Caco-2 (cell line): ENCODE measurements at regions of chr19 and their contacts with region 1.

Region 1: DNA sequence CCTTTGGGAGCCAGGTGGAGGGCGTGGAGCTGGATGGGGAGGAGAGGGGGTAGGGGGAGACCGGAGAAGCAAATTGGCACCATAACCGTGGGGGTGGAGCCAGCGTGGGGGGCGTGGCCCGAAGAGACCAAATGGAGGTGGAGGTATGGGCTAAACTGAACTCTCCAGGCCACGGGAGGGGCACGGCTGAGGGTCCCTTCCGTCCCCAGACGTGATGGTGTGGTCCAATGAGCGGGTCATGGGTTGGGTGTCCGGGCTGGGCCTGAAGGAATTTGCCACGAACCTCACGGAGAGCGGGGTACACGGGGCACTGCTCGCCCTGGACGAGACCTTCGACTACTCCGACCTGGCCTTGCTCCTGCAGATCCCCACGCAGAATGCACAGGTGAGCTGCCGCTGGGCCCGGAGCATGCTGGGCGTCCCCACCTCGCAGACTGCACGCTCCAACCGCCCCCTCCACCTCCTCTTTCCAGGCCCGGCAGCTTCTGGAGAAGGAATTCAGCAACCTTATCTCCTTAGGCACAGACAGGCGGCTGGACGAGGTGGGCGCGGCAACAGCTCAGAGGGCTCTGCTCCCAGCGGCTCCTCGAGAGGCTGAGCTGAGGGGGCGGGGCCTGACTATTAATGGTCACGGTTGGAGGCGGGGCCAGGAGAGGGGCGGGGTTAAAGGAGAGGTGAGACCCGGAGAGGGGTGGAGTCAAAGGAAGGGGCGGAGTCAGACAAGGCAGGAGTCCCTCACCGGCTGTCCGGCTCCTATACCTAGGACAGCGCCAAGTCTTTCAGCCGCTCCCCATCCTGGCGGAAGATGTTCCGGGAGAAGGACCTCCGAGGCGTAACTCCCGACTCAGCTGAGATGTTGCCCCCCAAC is 6.2 kb downstream of the HRC start:
- DNase-seq: peak; percentile 100
- H3K4me3 ChIP-seq: peak overlapping the region; percentile 69
- H3K4me3 Mint-ChIP-seq: peak overlapping the region; percentile 91
- H3K27ac Mint-ChIP-seq: peak overlapping the region; percentile 61
- H3K4me1 ChIP-seq: peaks cover 13% of the 10 kb centered on the region
- H3K4me1 Mint-ChIP-seq: peaks cover 30% of the 10 kb centered on the region
- H3K27me3 ChIP-seq: no peaks in the 10 kb centered on the region
- H3K27me3 Mint-ChIP-seq: no peaks in the 10 kb centered on the region
- CTCF ChIP-seq: no peak

Region 2: DNA sequence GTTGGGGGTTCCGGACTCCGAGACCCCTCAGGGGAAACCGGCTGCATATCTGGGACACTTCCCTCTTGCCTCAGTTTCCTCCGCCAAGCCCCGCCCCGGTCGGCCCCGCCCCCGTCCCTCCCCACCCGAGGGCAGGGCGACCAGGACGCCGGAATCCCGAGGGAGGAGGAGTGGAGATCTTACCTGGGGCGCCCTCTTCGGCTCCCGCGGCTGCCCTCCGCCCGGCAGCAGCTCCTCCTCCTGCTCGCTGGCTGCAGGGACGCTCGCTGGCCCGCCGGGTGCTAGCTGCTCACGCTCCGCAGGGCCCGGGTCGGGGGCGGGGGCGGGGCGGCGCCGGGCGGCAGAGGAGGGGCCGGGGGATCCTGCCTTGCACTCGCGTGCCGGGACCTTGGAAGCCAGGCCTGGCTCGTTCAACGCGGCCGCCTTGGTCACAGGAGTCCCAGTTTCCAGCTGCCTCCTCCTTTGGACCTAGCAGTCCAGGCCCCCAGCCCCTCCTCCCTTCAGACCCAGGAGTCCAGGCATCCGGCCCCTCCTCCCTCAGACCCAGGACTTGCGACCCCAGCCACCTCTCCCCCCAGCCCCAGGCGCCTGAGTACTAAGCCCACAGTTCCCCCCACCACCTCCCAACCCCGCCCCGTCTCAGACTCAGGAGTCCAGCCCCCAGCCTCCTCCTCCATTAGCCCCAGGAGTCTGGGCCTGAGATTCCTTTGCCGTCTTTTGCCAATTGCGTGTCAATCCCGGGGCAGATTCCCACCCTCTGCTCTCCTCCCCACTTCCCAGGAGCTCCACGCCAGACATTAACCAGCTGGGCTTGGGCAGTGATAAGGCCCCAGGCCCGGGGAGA is 84.0 kb before region 1 on chr19 and contains the start of gene NTF4:
- CTCF ChIA-PET with region 1: interaction called, 13 read pairs
- POLR2A ChIA-PET with region 1: interaction called, 3 read pairs
- intact Hi-C with region 1: no loop called
- DNase-seq: peak; percentile 92
- H3K4me3 ChIP-seq: peak within 1 kb of the TSS; percentile 38
- H3K4me3 Mint-ChIP-seq: peak within 1 kb of the TSS; percentile 71
- H3K27ac Mint-ChIP-seq: peak within 1 kb of the TSS; percentile 73
- H3K4me1 ChIP-seq: peaks cover 34% of the 10 kb centered on the region
- H3K4me1 Mint-ChIP-seq: peaks cover 26% of the 10 kb centered on the region
- H3K27me3 ChIP-seq: no peaks in the 10 kb centered on the region
- H3K27me3 Mint-ChIP-seq: no peaks in the 10 kb centered on the region
- CTCF ChIP-seq: peak in 1 of 2 experiments; percentile 29
- total RNA-seq, gene NTF4: 9.1 and 10.2 TPM in 2 replicates

Region 3: DNA sequence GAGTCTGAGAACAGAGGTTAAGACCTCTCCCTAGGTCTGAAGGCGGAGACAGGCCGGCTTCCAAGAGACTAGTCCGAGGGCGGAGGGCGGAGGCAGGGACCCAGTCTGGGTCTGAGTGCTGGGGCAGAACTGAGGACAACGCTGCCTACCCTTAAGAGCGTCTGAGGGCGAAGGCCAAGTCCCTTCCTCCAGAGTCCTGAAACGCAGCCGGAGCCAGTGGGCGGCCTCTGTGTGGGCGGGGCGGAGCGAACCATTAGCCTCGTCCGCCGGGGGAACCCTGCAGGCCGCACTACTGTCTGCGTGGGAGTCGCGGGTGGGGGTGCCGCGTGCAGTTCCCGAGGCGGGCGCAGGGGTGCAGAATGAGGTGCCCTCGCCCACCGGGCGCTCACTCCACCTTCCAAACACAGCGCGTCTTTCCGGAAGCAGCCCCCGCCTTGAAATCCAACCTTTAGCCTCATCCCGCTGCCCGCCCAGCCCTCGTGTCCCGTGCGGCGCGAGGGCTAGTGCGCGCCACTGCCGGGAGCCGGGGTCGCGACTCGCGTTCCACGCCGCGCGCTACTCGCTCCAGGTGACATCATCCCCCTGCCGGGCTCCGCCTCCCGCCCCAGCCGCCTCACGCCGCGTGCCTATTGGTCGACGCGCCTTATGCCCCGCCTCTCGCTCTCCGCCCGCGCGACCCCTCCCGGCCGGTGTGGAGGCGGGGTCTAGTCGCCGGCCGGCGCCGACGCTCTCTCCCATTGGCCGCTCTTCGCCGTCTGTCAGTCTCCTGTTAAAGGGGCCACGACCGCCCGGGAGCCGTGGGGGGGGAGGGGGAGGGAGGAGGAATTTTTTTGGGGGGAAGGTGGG is 30.2 kb before region 1 on chr19 and contains the start of gene C19orf73:
- CTCF ChIA-PET with region 1: interaction called, 19 read pairs
- POLR2A ChIA-PET with region 1: interaction called, 3 read pairs
- intact Hi-C with region 1: loop called (anchors 2 kb)
- DNase-seq: peak; percentile 94 to 98
- H3K4me3 ChIP-seq: peak within 1 kb of the TSS; percentile 88
- H3K4me3 Mint-ChIP-seq: peak within 1 kb of the TSS; percentile 94
- H3K27ac Mint-ChIP-seq: peak within 1 kb of the TSS; percentile 85
- H3K4me1 ChIP-seq: peaks cover 18% of the 10 kb centered on the region
- H3K4me1 Mint-ChIP-seq: peaks cover 32% of the 10 kb centered on the region
- H3K27me3 ChIP-seq: no peaks in the 10 kb centered on the region
- H3K27me3 Mint-ChIP-seq: peaks cover 4% of the 10 kb centered on the region
- CTCF ChIP-seq: no peak
- total RNA-seq, gene C19orf73: 1.7 and 2.1 TPM in 2 replicates

Region 4: GRCh38 chr19:49127674-49128544 is 21.1 kb before region 1 on chr19:
- CTCF ChIA-PET with region 1: interaction called, 9 read pairs
- POLR2A ChIA-PET with region 1: interaction called, 14 read pairs
- intact Hi-C with region 1: loop called (anchors 1 kb)
- DNase-seq: peak; percentile 98
- H3K4me3 ChIP-seq: peak overlapping the region; percentile 46
- H3K4me3 Mint-ChIP-seq: peak overlapping the region; percentile 85
- H3K27ac Mint-ChIP-seq: peak overlapping the region; percentile 80
- H3K4me1 ChIP-seq: peaks cover 17% of the 10 kb centered on the region; the same call in 1 of the 2 replicates
- H3K4me1 Mint-ChIP-seq: peaks cover 26% of the 10 kb centered on the region
- H3K27me3 ChIP-seq: no peaks in the 10 kb centered on the region
- H3K27me3 Mint-ChIP-seq: no peaks in the 10 kb centered on the region
- CTCF ChIP-seq: peak in 1 of 2 experiments; percentile 16

Region 5: GRCh38 chr19:49182848-49183344 is 33.9 kb after region 1 on chr19:
- CTCF ChIA-PET with region 1: no interaction called
- POLR2A ChIA-PET with region 1: interaction called, 10 read pairs
- intact Hi-C with region 1: no loop called
- DNase-seq: no peak
- H3K4me3 ChIP-seq: no peak overlapping the region
- H3K4me3 Mint-ChIP-seq: no peak overlapping the region
- H3K27ac Mint-ChIP-seq: no peak overlapping the region
- H3K4me1 ChIP-seq: no peaks in the 10 kb centered on the region
- H3K4me1 Mint-ChIP-seq: no peaks in the 10 kb centered on the region
- H3K27me3 ChIP-seq: no peaks in the 10 kb centered on the region
- H3K27me3 Mint-ChIP-seq: no peaks in the 10 kb centered on the region
- CTCF ChIP-seq: no peak

Region 6: DNA sequence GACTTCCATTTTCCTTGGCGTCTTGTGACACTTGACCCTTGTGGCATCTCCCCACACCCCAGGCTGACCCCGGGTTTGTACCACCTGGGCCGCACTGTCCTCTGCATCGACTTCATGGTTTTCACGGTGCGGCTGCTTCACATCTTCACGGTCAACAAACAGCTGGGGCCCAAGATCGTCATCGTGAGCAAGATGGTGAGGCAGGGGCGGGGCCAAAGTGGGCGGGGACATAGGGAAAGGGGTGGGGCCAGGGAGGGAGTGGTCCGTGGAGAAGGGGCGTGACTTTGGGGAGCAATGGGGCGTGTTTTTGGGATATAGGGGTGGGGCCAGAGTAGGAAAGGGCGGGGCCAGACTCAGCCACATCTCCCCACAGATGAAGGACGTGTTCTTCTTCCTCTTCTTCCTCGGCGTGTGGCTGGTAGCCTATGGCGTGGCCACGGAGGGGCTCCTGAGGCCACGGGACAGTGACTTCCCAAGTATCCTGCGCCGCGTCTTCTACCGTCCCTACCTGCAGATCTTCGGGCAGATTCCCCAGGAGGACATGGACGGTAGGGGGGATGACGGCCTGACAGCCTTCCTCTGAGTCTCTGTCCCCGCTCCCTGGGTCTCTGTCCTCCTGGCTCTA is 51.3 kb after region 1 on chr19:
- CTCF ChIA-PET with region 1: interaction called, 38 read pairs
- POLR2A ChIA-PET with region 1: interaction called, 6 read pairs
- intact Hi-C with region 1: loop called (anchors 1 kb)
- DNase-seq: peak; percentile 31 to 55
- H3K4me3 ChIP-seq: no peak overlapping the region
- H3K4me3 Mint-ChIP-seq: no peak overlapping the region
- H3K27ac Mint-ChIP-seq: peak overlapping the region; percentile 20
- H3K4me1 ChIP-seq: no peaks in the 10 kb centered on the region
- H3K4me1 Mint-ChIP-seq: no peaks in the 10 kb centered on the region
- H3K27me3 ChIP-seq: no peaks in the 10 kb centered on the region
- H3K27me3 Mint-ChIP-seq: no peaks in the 10 kb centered on the region
- CTCF ChIP-seq: no peak

Region 7: GRCh38 chr19:49210108-49210900 is 61.3 kb after region 1 on chr19:
- CTCF ChIA-PET with region 1: interaction called, 7 read pairs
- POLR2A ChIA-PET with region 1: no interaction called
- intact Hi-C with region 1: loop called (anchors 2 kb)
- DNase-seq: peak; percentile 33 to 57
- H3K4me3 ChIP-seq: no peak overlapping the region
- H3K4me3 Mint-ChIP-seq: no peak overlapping the region
- H3K27ac Mint-ChIP-seq: no peak overlapping the region
- H3K4me1 ChIP-seq: no peaks in the 10 kb centered on the region
- H3K4me1 Mint-ChIP-seq: peaks cover 12% of the 10 kb centered on the region
- H3K27me3 ChIP-seq: no peaks in the 10 kb centered on the region
- H3K27me3 Mint-ChIP-seq: no peaks in the 10 kb centered on the region
- CTCF ChIP-seq: no peak